ENCODE measurements at regions of chr2 and their contacts with region 1.

Region 1: GRCh38 chr2:234694244-234695013 is 197.5 kb upstream of the ARL4C start:
- DNase-seq: no peak
- H3K4me3 ChIP-seq: no peak overlapping the region
- H3K27ac ChIP-seq: peak overlapping the region; percentile 52
- H3K27me3 ChIP-seq: no peaks in the 10 kb centered on the region
- CTCF ChIP-seq: no peak

Region 2: GRCh38 chr2:234679741-234680687 is 14.4 kb before region 1 on chr2:
- CTCF ChIA-PET with region 1: no interaction called
- POLR2A ChIA-PET with region 1: interaction called, 10 read pairs
- DNase-seq: peak; percentile 94
- H3K4me3 ChIP-seq: peak overlapping the region; percentile 17
- H3K27ac ChIP-seq: peak overlapping the region; percentile 98
- H3K27me3 ChIP-seq: no peaks in the 10 kb centered on the region
- CTCF ChIP-seq: no peak

Measured in AG04450 (cell line).